Breast epithelium (tissue), 4 donors: ENCODE measurements at regions of chr17 and their contacts with region 1.

Region 1: GRCh38 chr17:42405963-42406495 is 17.0 kb downstream of the CAVIN1 start:
- DNase-seq: peak; percentile 79 to 86
- H3K4me3 ChIP-seq: no peak overlapping the region
- H3K27ac ChIP-seq: peak overlapping the region; percentile 92 to 93
- H3K4me1 ChIP-seq: peaks cover 5 to 23% of the 10 kb centered on the region in 2 donors
- H3K27me3 ChIP-seq: no peaks in the 10 kb centered on the region
- CTCF ChIP-seq: peak; percentile 64 to 92 (median 85)
- POLR2A ChIP-seq: no peak

Region 2: DNA sequence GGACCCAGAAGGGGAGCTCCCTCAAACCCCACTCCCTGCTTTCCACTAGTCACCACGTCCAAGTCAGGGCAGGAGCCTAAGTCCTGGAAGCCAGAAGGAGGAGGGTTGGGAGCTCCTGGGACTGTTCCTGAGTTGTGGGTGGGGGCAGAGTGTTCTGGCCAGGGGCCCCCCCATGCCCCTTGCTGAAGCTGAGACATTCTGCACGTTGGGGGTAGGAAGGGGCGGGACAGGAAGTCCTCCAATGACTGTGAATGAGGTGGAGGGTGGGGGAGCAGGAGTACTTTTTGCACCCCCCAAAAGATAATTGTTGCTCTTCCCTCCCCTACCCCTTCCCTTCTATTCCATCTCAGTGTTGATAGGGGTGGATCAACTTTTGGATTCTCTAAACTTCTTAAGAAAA is 334.2 kb before region 1 on chr17:
- intact Hi-C with region 1: loop called (anchors 2 kb)
- DNase-seq: no peak
- H3K4me3 ChIP-seq: peak overlapping the region in 2 of 3 donors; percentile 45 to 66
- H3K27ac ChIP-seq: no peak overlapping the region
- H3K4me1 ChIP-seq: no peaks in the 10 kb centered on the region
- H3K27me3 ChIP-seq: peaks cover 4 to 10% of the 10 kb centered on the region in 2 donors
- CTCF ChIP-seq: no peak
- POLR2A ChIP-seq: no peak

Region 3: DNA sequence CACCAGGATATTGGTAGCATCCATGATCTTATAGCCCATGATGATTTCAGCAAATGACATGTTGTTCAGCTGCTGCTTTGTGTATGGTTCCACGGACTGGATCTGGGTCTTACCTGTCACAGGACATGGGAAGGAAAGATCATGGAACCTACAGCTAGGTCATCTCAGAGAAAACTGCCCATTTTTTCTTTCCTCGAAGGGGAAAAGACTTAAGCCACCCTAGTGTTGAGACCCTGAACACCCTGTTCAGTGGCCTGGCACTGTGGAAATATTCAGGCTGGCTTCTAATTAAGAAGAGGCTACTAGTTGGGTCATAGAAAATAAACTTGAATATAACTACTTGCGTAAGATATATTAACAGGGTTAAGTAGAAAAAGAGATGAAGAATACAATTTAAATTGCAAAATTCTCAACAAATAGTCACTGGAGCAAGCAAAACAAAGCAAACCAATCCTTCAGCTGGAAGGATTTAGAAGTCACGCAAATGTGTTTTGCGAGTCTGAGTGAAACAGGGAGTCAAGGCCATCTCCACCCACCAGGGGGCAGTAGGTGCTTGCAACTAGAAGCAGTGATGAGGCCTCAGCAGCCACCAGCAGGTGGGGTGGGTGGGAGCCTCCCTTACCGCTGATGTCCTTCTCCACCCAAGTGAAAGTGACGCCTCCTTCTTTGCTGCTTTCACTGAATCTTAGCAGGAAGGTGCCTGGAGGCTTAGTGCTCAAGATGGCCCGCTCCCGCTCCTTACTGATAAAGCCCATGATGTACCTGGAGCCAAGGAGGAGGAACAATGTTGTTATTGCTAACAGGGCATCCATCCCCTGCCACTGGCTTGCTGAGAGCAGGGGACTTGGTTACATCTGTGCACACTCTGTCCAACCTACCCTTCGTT is 83.4 kb before region 1 on chr17:
- intact Hi-C with region 1: loop called (anchors 5 kb)
- DNase-seq: peak; percentile 93 to 95
- H3K4me3 ChIP-seq: no peak overlapping the region
- H3K27ac ChIP-seq: peak overlapping the region; percentile 59 to 70
- H3K4me1 ChIP-seq: peaks cover 0 to 5% of the 10 kb centered on the region in 2 donors
- H3K27me3 ChIP-seq: no peaks in the 10 kb centered on the region
- CTCF ChIP-seq: peak; percentile 99 to 100 (median 100)
- POLR2A ChIP-seq: no peak